Activated T-helper 2 cell treated with anti-CD3 and anti-CD28 coated beads, Interferon-gamma antibody, Interleukin-2, Interleukin-4, amounts not matched to agents 10 μg/mL and 5 μg/mL and 100 μg/mL, durations not matched to agents 14 hours and 24 hours and 36 hours (primary cell): ENCODE measurements at regions of chr5 and their contacts with region 1.

Region 1: DNA sequence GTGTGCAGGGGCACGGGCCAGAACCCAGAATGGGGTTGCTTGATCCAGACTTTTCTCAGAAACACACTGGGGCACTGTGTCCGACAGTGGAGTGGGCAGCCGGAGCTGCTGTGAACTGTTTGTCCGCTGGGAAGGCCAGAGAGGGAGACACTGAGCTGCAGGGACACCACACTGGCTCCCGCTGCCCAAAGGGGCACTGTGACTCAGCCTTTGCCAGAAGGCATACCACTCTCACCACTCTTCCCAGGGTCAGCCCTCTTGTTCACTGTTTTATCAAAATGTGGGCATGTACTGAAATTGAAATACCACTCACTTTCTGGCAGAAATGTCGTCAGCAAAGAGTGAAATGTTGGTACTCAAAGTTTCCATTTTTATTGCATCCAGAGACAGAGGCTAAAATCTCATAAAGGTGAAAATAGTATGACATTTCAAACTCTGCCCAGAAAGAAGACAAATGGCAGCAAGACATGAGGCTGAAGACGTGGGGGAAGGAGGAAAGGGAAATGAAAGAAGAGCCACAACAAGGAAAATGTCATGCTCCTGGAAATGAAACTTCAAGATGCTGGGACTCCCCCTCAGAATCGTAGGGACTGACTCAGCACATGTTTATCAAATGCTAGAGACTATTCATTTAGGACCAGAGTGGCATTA is 4.5 kb upstream of the IL7R start:
- DNase-seq: no peak
- H3K4me3 Mint-ChIP-seq: peak overlapping the region; percentile 85
- H3K27ac Mint-ChIP-seq: peak overlapping the region; percentile 96
- H3K4me1 Mint-ChIP-seq: peaks cover 61% of the 10 kb centered on the region
- H3K27me3 Mint-ChIP-seq: no peaks in the 10 kb centered on the region

Region 2: DNA sequence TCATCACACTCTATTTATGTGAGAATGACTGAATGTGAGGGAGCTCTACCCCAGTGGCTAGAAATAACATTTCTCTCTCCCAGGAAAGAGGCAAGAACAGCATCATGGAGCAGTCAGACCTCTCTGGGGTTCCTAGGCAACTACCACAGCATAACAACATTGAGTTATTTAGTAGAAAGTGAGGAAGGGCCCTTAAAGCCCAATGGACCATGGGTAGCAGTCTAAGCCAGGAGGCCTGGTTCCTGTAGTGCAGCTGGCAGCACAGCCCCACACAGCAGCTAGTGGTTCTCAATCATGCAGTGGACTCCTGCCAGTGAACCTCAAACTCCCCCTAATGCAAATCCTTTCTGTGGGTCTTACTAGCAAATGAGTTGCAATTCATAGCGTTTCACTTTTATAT is 179.2 kb before region 1 on chr5:
- intact Hi-C with region 1: loop called (anchors 2 kb)
- DNase-seq: peak; percentile 16
- H3K4me3 Mint-ChIP-seq: no peak overlapping the region
- H3K27ac Mint-ChIP-seq: peak overlapping the region; percentile 42
- H3K4me1 Mint-ChIP-seq: peaks cover 46% of the 10 kb centered on the region
- H3K27me3 Mint-ChIP-seq: no peaks in the 10 kb centered on the region

Region 3: GRCh38 chr5:35785601-35786085 is 66.6 kb before region 1 on chr5:
- intact Hi-C with region 1: loop called (anchors 2 kb)
- DNase-seq: no peak
- H3K4me3 Mint-ChIP-seq: no peak overlapping the region
- H3K27ac Mint-ChIP-seq: peak overlapping the region; percentile 85
- H3K4me1 Mint-ChIP-seq: peaks cover 66% of the 10 kb centered on the region
- H3K27me3 Mint-ChIP-seq: no peaks in the 10 kb centered on the region

Region 4: DNA sequence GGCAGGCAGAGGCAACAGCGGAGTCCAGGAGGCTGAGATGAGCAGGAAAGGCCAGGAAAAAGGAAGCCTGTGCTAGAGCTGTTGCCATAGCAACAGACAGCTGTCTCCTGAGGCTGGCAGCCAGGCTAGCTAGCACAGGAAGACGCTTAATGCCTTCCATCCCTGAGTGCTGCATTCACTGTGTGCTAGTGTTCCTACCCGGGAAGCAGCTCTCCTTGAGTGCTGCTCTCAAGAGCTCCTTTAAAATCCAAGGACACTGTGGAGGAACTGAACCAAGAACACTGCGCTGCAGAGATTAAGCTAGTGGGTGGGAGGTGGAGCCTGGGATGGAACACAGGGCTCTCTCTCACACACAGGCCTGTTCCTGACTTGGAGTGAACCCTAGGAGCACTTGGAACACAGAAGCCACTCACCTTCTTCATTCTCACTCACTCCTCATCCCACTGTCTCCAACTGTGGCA is 49.0 kb before region 1 on chr5:
- intact Hi-C with region 1: no loop called
- DNase-seq: no peak
- H3K4me3 Mint-ChIP-seq: no peak overlapping the region
- H3K27ac Mint-ChIP-seq: peak overlapping the region; percentile 24
- H3K4me1 Mint-ChIP-seq: peaks cover 45% of the 10 kb centered on the region
- H3K27me3 Mint-ChIP-seq: no peaks in the 10 kb centered on the region

Region 5: GRCh38 chr5:35838370-35839042 is 13.7 kb before region 1 on chr5:
- intact Hi-C with region 1: loop called (anchors 1 kb)
- DNase-seq: no peak
- H3K4me3 Mint-ChIP-seq: no peak overlapping the region
- H3K27ac Mint-ChIP-seq: peak overlapping the region; percentile 85
- H3K4me1 Mint-ChIP-seq: peaks cover 51% of the 10 kb centered on the region
- H3K27me3 Mint-ChIP-seq: no peaks in the 10 kb centered on the region

Region 6: DNA sequence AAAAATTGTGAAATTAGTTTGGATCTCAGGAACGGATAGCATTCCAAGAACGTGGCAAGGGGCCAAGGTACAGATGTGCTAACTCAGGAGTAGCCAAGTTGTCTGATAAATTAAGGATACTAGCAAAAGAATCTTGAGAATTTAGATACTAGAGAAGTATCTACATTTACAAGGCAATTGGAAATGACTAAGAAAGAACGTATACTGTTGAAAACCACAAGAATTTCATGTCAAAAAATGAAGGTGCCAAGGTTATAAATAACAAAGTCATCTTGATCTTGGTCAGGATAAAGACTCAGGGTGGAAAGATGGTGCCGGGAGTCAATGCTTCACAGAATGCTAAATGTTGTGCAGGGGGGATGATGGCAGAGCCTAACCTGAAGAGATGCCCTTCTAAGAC is 67.0 kb after region 1 on chr5:
- intact Hi-C with region 1: loop called (anchors 1 kb)
- DNase-seq: no peak
- H3K4me3 Mint-ChIP-seq: no peak overlapping the region
- H3K27ac Mint-ChIP-seq: peak overlapping the region; percentile 83
- H3K4me1 Mint-ChIP-seq: peaks cover 37% of the 10 kb centered on the region
- H3K27me3 Mint-ChIP-seq: no peaks in the 10 kb centered on the region

Region 7: GRCh38 chr5:36202521-36202961 is 350.3 kb after region 1 on chr5:
- intact Hi-C with region 1: no loop called
- DNase-seq: no peak
- H3K4me3 Mint-ChIP-seq: no peak overlapping the region
- H3K27ac Mint-ChIP-seq: no peak overlapping the region
- H3K4me1 Mint-ChIP-seq: no peaks in the 10 kb centered on the region
- H3K27me3 Mint-ChIP-seq: no peaks in the 10 kb centered on the region